Transverse colon (tissue), 4 donors: ENCODE measurements at regions of chr4 and their contacts with region 1.

Region 1: GRCh38 chr4:155566354-155566753 is 100.3 kb upstream of the GUCY1A1 start:
- DNase-seq: no peak
- H3K4me3 ChIP-seq: no peak overlapping the region
- H3K27ac ChIP-seq: no peak overlapping the region
- H3K4me1 ChIP-seq: no peaks in the 10 kb centered on the region
- H3K27me3 ChIP-seq: no peaks in the 10 kb centered on the region
- CTCF ChIP-seq: no peak
- EP300 ChIP-seq: no peak
- POLR2A ChIP-seq: no peak

Region 2: DNA sequence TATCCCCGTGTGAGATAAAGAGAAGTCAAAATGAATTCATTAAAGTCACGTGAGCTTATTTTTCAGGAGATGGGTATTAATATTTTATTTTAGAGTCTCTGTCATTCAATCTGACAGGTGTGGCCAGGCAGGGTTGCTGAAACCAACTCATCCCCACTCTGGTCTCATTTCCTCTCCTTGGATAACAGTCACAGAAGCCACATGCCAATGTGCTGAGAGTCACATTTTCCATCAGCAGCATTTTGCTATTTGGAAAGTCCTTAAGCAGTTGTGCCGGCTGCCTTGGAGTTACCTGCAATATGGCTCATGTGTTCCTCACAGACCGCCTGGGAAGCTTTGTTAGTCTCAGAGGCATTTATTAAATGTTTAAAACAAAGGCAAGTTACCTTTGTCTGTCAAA is 1377.0 kb before region 1 on chr4:
- in situ Hi-C with region 1: no loop called
- intact Hi-C with region 1: no loop called
- DNase-seq: no peak
- H3K4me3 ChIP-seq: no peak overlapping the region
- H3K27ac ChIP-seq: no peak overlapping the region
- H3K4me1 ChIP-seq: no peaks in the 10 kb centered on the region
- H3K27me3 ChIP-seq: no peaks in the 10 kb centered on the region
- CTCF ChIP-seq: no peak
- EP300 ChIP-seq: no peak
- POLR2A ChIP-seq: no peak

Region 3: GRCh38 chr4:155592179-155592937 is 26.0 kb after region 1 on chr4:
- in situ Hi-C with region 1: no loop called
- intact Hi-C with region 1: loop called (anchors 1 kb)
- DNase-seq: no peak
- H3K4me3 ChIP-seq: no peak overlapping the region
- H3K27ac ChIP-seq: peak overlapping the region; percentile 4 to 51 (median 30)
- H3K4me1 ChIP-seq: peaks cover 0 to 4% (median 0%) of the 10 kb centered on the region in 4 donors
- H3K27me3 ChIP-seq: no peaks in the 10 kb centered on the region
- CTCF ChIP-seq: no peak
- EP300 ChIP-seq: no peak
- POLR2A ChIP-seq: no peak

Region 4: GRCh38 chr4:155639704-155640523 is 73.6 kb after region 1 on chr4:
- in situ Hi-C with region 1: no loop called
- intact Hi-C with region 1: no loop called
- DNase-seq: no peak
- H3K4me3 ChIP-seq: no peak overlapping the region
- H3K27ac ChIP-seq: peak overlapping the region in 2 of 4 donors; percentile 14 to 38
- H3K4me1 ChIP-seq: peaks cover 0 to 5% (median 0%) of the 10 kb centered on the region in 4 donors
- H3K27me3 ChIP-seq: no peaks in the 10 kb centered on the region
- CTCF ChIP-seq: no peak
- EP300 ChIP-seq: no peak
- POLR2A ChIP-seq: no peak